GM10248 (cell line): ENCODE measurements at regions of chr12 and their contacts with region 1.

Region 1: GRCh38 chr12:71708658-71709057 is 22.8 kb downstream of the TMEM19 start:
- DNase-seq: no peak
- CTCF ChIP-seq: no peak

Region 2: GRCh38 chr12:70698345-70698744 is 1010.3 kb before region 1 on chr12:
- CTCF ChIA-PET with region 1: no interaction called
- POLR2A ChIA-PET with region 1: no interaction called
- DNase-seq: no peak
- CTCF ChIP-seq: no peak

Region 3: DNA sequence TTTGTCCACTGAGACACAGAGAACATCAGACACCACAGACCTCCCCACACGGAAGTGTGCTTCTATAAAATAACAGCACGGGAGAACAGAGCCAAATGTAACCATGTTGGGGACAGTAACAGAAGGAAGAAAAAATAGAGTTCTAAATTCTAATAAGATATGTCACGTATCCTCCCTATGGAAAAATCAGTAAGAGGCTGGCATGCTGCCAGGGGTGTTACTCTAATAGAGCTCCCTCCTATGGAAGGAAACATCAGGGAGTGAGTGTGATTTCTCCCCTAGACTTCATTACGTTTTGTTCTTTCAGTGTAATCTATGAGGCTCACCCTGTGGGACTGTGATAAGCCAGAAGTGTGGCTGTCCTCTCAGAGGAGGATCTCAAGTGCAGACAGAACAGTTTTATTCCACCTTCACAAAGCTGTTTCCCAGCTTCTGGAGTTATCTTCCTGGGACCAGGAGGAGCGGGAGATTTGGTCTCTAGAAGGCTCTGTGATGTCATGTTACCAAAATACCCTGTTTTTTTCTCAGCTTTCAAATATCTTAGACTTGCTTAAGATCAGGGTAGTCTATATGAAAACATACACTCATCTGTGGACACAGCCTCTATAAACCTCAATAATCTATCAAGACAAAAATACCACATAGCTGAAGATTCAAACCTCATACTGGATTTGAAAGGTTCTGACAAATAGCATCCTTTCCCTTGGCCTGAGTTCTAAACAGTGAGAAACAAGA is 114.3 kb before region 1 on chr12:
- CTCF ChIA-PET with region 1: no interaction called
- POLR2A ChIA-PET with region 1: no interaction called
- DNase-seq: no peak
- CTCF ChIP-seq: no peak

Region 4: GRCh38 chr12:71719615-71720370 is 11.1 kb after region 1 on chr12:
- CTCF ChIA-PET with region 1: interaction called, 10 read pairs
- POLR2A ChIA-PET with region 1: no interaction called
- DNase-seq: no peak
- CTCF ChIP-seq: no peak